Activated CD4-positive, alpha-beta memory T cell treated with anti-CD3 and anti-CD28 coated beads for 36 hours (primary cell): ENCODE measurements at regions of chr12 and their contacts with region 1.

Region 1: DNA sequence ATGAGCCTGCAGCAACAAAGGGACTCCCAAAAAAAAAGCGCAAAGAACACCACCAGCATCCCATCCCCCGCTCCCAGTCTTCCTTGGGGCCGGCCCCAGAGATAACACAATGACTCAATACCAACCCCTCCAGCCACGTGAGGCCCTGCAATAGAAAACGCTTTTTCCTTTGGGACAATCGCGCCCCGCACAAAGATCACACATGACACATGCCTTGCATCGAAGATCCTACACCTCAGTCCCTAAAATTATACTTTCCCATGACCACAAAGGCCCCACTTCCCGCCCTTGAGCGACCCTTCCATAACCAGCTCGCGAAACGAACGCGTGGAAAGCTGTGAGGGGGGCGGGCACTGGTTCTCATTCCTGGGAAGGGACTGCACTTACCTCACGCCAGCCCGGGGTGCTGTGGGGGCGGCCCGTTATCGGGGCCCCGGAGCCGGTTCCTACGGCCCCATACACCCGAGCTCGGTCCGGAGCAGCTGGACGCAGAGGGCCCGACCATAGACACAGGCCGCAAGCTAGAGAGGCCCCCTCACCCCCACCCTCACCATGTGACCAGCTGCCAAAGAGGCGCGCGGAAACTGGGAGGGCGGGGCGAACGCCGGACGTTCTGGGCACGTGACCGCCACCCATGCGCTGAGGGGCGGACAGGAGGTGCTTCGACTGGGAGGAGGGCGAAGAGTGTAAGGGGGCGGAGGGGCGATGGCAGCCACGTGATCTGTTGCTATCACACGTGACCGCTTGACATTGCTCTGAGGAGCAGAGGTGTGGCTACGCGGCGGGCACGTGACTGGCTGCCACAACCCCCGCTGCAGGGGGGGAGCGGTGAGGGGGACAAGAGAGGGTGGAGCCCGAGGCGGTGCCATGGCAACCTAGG is at the start of gene CDK4:
- DNase-seq: peak; percentile 100
- H3K4me3 Mint-ChIP-seq: peak within 1 kb of the TSS; percentile 95
- H3K27ac Mint-ChIP-seq: peak within 1 kb of the TSS; percentile 91
- H3K4me1 Mint-ChIP-seq: peaks cover 54% of the 10 kb centered on the region
- H3K27me3 Mint-ChIP-seq: no peaks in the 10 kb centered on the region
- total RNA-seq, gene CDK4: 181 to 195 TPM

Region 2: GRCh38 chr12:57078519-57079404 is 673.3 kb before region 1 on chr12 and contains the start of gene NEMP1:
- CTCF ChIA-PET with region 1: no interaction called
- POLR2A ChIA-PET with region 1: no interaction called
- intact Hi-C with region 1: loop called (anchors 10 kb)
- DNase-seq: peak; percentile 98
- H3K4me3 Mint-ChIP-seq: peak within 1 kb of the TSS; percentile 99
- H3K27ac Mint-ChIP-seq: peak within 1 kb of the TSS; percentile 97
- H3K4me1 Mint-ChIP-seq: peaks cover 36% of the 10 kb centered on the region
- H3K27me3 Mint-ChIP-seq: no peaks in the 10 kb centered on the region
- total RNA-seq, gene NEMP1: 70.6 to 73.5 TPM

Region 3: GRCh38 chr12:57693659-57694458 is 58.2 kb before region 1 on chr12 and contains the start of gene OS9:
- CTCF ChIA-PET with region 1: interaction called, 3 read pairs
- POLR2A ChIA-PET with region 1: interaction called, 3 read pairs
- intact Hi-C with region 1: loop called (anchors 1 kb)
- DNase-seq: peak; percentile 97
- H3K4me3 Mint-ChIP-seq: no peak within 1 kb of the TSS
- H3K27ac Mint-ChIP-seq: no peak within 1 kb of the TSS
- H3K4me1 Mint-ChIP-seq: no peaks in the 10 kb centered on the region
- H3K27me3 Mint-ChIP-seq: peaks cover under 1% of the 10 kb centered on the region
- total RNA-seq, gene OS9: 73.4 to 74.8 TPM

Region 4: DNA sequence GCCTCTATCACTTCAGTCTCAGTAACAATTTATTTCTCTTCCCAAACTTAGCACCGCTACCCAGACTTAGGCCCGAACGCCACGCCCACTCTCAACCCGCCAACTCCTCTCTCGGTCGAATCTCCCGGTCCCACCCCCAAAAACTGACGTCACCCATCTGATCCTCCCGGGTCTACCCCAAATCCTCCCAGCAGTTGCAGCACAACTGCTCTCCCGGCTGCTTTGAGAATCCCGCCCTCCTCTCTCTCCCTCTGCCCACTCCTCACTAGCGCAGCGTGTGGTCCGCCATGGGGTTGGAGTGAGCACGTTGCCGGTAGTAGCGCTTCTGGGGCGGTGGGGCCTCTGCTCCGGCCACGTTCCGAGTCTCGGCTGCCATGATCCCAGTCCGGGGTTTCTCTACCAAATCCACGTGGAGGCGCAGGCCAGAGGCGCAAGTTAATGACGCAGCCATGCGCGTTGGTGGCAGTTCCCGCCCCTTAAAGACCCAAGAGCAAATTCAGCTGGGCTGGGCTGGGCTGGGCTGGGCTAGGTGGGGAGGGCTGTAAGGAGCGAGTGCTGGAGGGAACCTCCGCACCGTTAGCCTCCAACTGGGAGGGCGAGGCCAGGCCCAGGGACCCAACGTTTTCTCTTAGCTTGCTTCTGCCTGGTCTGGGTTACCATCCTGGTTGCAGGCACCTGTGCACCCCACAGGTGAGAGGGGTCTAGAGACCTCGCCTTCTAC is 19.8 kb after region 1 on chr12 and contains the start of gene METTL1:
- CTCF ChIA-PET with region 1: interaction called, 52 read pairs
- POLR2A ChIA-PET with region 1: interaction called, 6 read pairs
- intact Hi-C with region 1: loop called (anchors 1 kb)
- DNase-seq: peak; percentile 97
- H3K4me3 Mint-ChIP-seq: peak within 1 kb of the TSS; percentile 99
- H3K27ac Mint-ChIP-seq: peak within 1 kb of the TSS; percentile 97
- H3K4me1 Mint-ChIP-seq: peaks cover 24% of the 10 kb centered on the region
- H3K27me3 Mint-ChIP-seq: no peaks in the 10 kb centered on the region
- total RNA-seq, gene METTL1: 30.0 to 32.0 TPM

Region 5: DNA sequence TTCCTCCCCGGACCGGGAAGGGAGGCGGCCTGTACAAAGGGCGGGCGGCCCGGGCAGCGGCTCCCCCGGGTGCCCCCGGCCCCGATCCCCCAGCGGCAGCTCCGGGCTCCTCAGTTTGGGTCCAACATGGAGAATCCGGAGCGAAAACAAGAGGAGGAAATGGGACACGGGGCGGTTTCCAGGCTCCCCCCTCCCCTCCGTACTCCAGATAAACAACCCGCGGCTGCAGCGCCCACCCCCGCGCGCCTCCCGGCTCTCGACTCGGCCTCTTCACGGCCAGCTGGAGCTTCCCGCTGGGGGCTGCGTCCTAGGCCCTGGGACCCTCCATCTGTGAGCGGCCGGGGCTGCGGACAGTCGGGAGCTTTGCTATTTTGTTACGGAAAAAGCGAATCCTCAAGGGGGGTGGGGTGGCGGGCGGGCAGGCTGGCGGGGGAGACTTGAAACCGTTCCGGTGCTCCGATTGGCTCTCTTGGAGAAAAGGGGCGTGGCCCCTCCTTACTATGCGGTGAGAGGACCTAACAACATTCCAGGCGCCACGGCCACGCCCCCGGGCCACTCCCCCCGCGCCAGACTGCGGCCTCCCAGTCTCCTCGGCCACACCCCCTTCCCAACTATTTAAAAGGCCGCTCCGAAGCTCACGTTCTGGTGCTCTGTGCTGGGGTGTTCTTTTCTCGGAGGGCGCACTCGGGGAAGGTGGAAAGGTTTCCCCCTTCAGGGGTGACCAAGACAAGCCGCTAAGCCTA is 94.7 kb after region 1 on chr12 and contains the start of gene CTDSP2:
- CTCF ChIA-PET with region 1: interaction called, 5 read pairs
- POLR2A ChIA-PET with region 1: no interaction called
- intact Hi-C with region 1: loop called (anchors 1 kb)
- DNase-seq: peak; percentile 94
- H3K4me3 Mint-ChIP-seq: peak within 1 kb of the TSS; percentile 82
- H3K27ac Mint-ChIP-seq: peak within 1 kb of the TSS; percentile 78
- H3K4me1 Mint-ChIP-seq: peaks cover 37% of the 10 kb centered on the region
- H3K27me3 Mint-ChIP-seq: peaks cover 7% of the 10 kb centered on the region
- total RNA-seq, gene CTDSP2: 100 to 101 TPM

Region 6: DNA sequence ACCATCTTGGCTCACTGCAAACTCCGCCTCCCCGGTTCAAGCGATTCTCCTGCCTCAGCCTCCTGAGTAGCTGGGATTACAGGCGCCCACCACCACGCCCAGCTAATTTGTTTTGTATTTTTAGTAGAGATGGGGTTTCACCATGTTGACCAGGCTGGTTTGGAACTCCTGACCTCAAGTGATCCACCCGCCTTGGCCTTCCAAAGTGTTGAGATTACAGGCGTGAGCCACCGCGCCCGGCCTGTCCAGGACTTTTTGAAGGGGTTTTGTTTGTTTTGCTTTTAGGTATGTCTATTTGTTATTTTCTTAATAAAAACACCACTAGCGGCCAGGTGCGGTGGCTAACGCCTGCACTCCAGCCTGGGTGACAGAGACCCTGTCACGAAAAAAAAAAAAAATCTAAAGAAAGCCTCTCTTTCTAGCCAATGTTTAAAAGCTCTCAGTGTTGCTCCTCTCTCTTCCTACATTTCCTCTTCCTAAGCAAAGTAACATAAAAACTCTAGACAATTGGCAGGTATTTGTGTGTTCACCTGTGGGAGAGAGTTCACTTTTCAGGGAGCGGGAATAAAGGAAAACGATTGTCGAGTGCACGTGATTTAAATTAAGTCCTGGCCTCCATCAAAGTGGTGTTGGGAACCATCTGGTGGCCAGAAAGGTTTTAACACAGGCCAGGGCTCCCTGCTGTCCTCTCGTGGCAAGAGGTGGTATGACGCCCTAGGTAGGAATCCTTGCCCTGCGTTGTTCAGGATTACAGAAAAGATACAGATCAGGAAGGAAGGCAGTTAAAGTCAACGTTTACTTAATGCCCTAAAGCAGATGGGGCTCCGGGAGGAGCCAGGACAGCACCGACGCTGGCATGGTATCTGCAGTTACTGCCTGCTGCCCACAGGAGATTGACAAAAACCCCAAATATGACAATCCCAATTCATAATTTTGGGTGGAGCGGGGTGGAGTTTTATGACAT is 153.1 kb after region 1 on chr12:
- CTCF ChIA-PET with region 1: interaction called, 20 read pairs
- POLR2A ChIA-PET with region 1: no interaction called
- intact Hi-C with region 1: loop called (anchors 1 kb)
- DNase-seq: peak; percentile 91
- H3K4me3 Mint-ChIP-seq: peak overlapping the region; percentile 52
- H3K27ac Mint-ChIP-seq: peak overlapping the region; percentile 10
- H3K4me1 Mint-ChIP-seq: peaks cover 7% of the 10 kb centered on the region
- H3K27me3 Mint-ChIP-seq: peaks cover 14% of the 10 kb centered on the region